ENCODE measurements at regions of chr2 and their contacts with region 1.

Region 1: DNA sequence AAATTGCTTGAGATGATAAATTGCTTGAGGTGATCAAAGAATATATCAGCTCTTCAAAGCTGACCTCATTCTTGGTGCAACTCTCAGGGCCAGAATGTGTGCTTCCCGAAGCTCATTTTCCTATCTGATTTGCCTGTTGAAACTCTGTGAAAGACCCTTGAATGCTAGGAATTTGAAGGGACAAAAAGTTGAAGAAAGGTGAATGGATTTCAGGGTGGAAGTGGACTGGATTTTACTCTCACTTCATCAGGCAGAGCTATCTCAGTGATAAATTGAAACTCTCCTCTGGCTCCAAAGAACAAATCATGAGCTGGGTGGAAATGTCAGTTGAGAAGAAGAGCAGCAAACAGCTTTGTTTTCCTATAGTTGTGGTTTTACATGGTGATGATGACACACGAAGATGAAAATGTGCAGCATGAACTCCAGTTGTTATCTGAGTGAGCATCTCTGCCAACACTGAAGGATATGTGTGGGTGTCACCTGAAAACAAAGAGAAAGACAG is 34.4 kb downstream of the CD28 start:
- DNase-seq: peak in 7 of 9 donors; percentile 68 to 94 (median 88)
- ATAC-seq: peak; percentile 93
- H3K4me3 ChIP-seq: no peak overlapping the region
- H3K4me3 Mint-ChIP-seq: peak overlapping the region; percentile 60 to 87 (median 70)
- H3K27ac ChIP-seq: peak overlapping the region; percentile 80
- H3K27ac Mint-ChIP-seq: peak overlapping the region; percentile 79 to 98 (median 96)
- H3K4me1 ChIP-seq: peaks cover 55 to 86% of the 10 kb centered on the region in 2 donors
- H3K4me1 Mint-ChIP-seq: peaks cover 57 to 93% (median 84%) of the 10 kb centered on the region in 7 donors
- H3K27me3 ChIP-seq: no peaks in the 10 kb centered on the region
- H3K27me3 Mint-ChIP-seq: no peaks in the 10 kb centered on the region

Region 2: GRCh38 chr2:202564226-202564625 is 1176.6 kb before region 1 on chr2:
- CTCF ChIA-PET with region 1: no interaction called
- POLR2A ChIA-PET with region 1: no interaction called
- intact Hi-C with region 1: no loop called
- DNase-seq: no peak
- ATAC-seq: no peak
- H3K4me3 ChIP-seq: no peak overlapping the region
- H3K4me3 Mint-ChIP-seq: no peak overlapping the region
- H3K27ac ChIP-seq: no peak overlapping the region
- H3K27ac Mint-ChIP-seq: no peak overlapping the region
- H3K4me1 ChIP-seq: no peaks in the 10 kb centered on the region
- H3K4me1 Mint-ChIP-seq: no peaks in the 10 kb centered on the region
- H3K27me3 ChIP-seq: no peaks in the 10 kb centered on the region
- H3K27me3 Mint-ChIP-seq: no peaks in the 10 kb centered on the region

Region 3: GRCh38 chr2:203718087-203718486 is 22.7 kb before region 1 on chr2:
- CTCF ChIA-PET with region 1: interaction called, 31 read pairs
- POLR2A ChIA-PET with region 1: interaction called, 343 read pairs
- intact Hi-C with region 1: loop called (anchors 1 kb)
- DNase-seq: peak in 8 of 9 donors; percentile 45 to 62 (median 60)
- ATAC-seq: peak; percentile 49
- H3K4me3 ChIP-seq: peak overlapping the region; percentile 29
- H3K4me3 Mint-ChIP-seq: peak overlapping the region; percentile 23 to 91 (median 80)
- H3K27ac ChIP-seq: peak overlapping the region; percentile 71
- H3K27ac Mint-ChIP-seq: peak overlapping the region; percentile 90 to 99 (median 97)
- H3K4me1 ChIP-seq: peaks cover 89 to 95% of the 10 kb centered on the region in 2 donors
- H3K4me1 Mint-ChIP-seq: peaks cover 77 to 100% (median 95%) of the 10 kb centered on the region in 7 donors
- H3K27me3 ChIP-seq: no peaks in the 10 kb centered on the region
- H3K27me3 Mint-ChIP-seq: no peaks in the 10 kb centered on the region

Region 4: DNA sequence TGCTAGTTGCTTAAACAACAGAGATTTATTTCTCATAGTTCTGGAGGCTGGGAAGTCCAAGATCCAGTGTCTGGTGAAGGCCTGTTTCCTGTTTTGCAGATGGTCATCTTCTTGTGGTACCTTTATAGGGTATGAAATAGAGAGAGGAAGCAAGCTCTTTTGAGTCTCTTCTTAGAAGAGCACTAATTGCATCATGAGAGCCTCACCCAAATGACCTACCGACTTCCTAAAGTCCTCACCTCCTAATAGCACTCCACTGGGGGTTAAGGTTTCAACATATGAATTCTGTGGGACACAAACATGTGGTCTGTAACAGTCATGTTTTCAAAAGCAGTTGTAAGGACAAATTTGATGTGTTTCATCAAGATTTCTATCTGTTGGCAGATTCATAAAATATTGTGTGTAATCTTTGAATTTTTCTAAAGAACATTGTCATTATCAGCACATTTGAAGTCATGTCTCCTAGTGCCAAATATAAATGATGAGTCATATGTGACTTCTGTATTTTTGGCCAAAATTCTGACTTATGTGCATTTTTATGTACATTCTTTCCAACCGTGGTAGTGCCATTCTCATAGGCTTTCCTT is 10.9 kb after region 1 on chr2:
- CTCF ChIA-PET with region 1: interaction called, 4 read pairs
- POLR2A ChIA-PET with region 1: interaction called, 31 read pairs
- intact Hi-C with region 1: loop called (anchors 1 kb)
- DNase-seq: no peak
- ATAC-seq: no peak
- H3K4me3 ChIP-seq: no peak overlapping the region
- H3K4me3 Mint-ChIP-seq: no peak overlapping the region
- H3K27ac ChIP-seq: no peak overlapping the region
- H3K27ac Mint-ChIP-seq: peak overlapping the region in 7 of 9 donors; percentile 4 to 56 (median 38)
- H3K4me1 ChIP-seq: peaks cover 12 to 22% of the 10 kb centered on the region in 2 donors
- H3K4me1 Mint-ChIP-seq: peaks cover 22 to 68% (median 57%) of the 10 kb centered on the region in 7 donors
- H3K27me3 ChIP-seq: no peaks in the 10 kb centered on the region
- H3K27me3 Mint-ChIP-seq: no peaks in the 10 kb centered on the region

Region 5: GRCh38 chr2:203804070-203804469 is 63.2 kb after region 1 on chr2:
- CTCF ChIA-PET with region 1: interaction called, 3 read pairs
- POLR2A ChIA-PET with region 1: interaction called, 12 read pairs
- intact Hi-C with region 1: loop called (anchors 2 kb)
- DNase-seq: peak in 8 of 9 donors; percentile 27 to 57 (median 42)
- ATAC-seq: peak; percentile 75
- H3K4me3 ChIP-seq: peak overlapping the region; percentile 12
- H3K4me3 Mint-ChIP-seq: peak overlapping the region; percentile 23 to 80 (median 63)
- H3K27ac ChIP-seq: peak overlapping the region; percentile 47
- H3K27ac Mint-ChIP-seq: peak overlapping the region; percentile 1 to 83 (median 76)
- H3K4me1 ChIP-seq: peaks cover 28 to 34% of the 10 kb centered on the region in 2 donors
- H3K4me1 Mint-ChIP-seq: peaks cover 27 to 83% (median 72%) of the 10 kb centered on the region in 7 donors
- H3K27me3 ChIP-seq: no peaks in the 10 kb centered on the region
- H3K27me3 Mint-ChIP-seq: peaks cover 0 to 3% (median 0%) of the 10 kb centered on the region in 5 donors

Region 6: DNA sequence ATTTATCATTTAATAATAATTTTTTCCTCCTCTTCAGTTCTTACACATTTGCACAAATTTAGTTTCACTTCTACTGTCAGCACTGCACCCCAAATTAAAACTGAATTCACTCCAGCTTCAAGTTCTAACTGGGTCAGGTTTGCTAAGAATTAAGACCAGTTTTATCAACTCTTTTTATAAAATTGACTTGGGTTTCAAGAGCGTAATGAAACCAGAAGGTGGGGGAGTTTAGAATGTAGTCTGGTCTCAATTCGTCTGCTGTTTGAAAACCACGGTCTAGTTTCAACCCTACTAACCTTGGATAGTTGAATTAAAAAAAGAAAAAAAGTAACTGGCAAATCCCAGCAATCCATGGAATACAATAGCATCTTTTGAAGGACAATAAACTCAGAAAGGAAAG is 112.4 kb after region 1 on chr2:
- CTCF ChIA-PET with region 1: no interaction called
- POLR2A ChIA-PET with region 1: no interaction called
- intact Hi-C with region 1: no loop called
- DNase-seq: no peak
- ATAC-seq: no peak
- H3K4me3 ChIP-seq: peak overlapping the region; percentile 20
- H3K4me3 Mint-ChIP-seq: peak overlapping the region in 9 of 10 donors; percentile 58 to 81 (median 67)
- H3K27ac ChIP-seq: peak overlapping the region; percentile 56
- H3K27ac Mint-ChIP-seq: peak overlapping the region in 8 of 9 donors; percentile 50 to 88 (median 67)
- H3K4me1 ChIP-seq: peaks cover 0 to 2% of the 10 kb centered on the region in 2 donors
- H3K4me1 Mint-ChIP-seq: peaks cover 13 to 48% (median 28%) of the 10 kb centered on the region in 7 donors
- H3K27me3 ChIP-seq: no peaks in the 10 kb centered on the region
- H3K27me3 Mint-ChIP-seq: no peaks in the 10 kb centered on the region

Region 7: DNA sequence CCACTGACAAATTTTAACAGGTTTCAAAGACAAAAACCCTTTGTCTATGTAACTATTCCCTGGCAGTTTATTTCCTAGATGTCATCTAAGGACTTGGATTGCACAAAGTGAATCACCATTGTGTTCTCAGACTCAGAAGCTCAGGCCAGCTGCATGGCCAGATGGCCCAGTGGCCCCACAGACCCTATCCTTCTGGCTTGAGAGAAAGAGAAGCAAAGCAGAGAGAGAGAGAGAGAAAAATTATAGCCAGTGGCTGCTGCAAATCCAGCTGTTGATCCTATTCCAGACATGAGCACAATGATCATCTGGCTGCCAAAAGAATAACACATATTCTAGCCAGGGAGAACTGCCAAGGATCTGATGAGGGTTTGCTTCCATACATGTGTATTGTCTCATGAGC is 152.6 kb after region 1 on chr2:
- CTCF ChIA-PET with region 1: no interaction called
- POLR2A ChIA-PET with region 1: no interaction called
- intact Hi-C with region 1: loop called in 1 of 2 experiments (anchors 5 kb)
- DNase-seq: no peak
- ATAC-seq: no peak
- H3K4me3 ChIP-seq: no peak overlapping the region
- H3K4me3 Mint-ChIP-seq: no peak overlapping the region
- H3K27ac ChIP-seq: no peak overlapping the region
- H3K27ac Mint-ChIP-seq: peak overlapping the region in 1 of 9 donors; percentile 77
- H3K4me1 ChIP-seq: no peaks in the 10 kb centered on the region
- H3K4me1 Mint-ChIP-seq: peaks cover 0 to 66% (median 7%) of the 10 kb centered on the region in 7 donors
- H3K27me3 ChIP-seq: no peaks in the 10 kb centered on the region
- H3K27me3 Mint-ChIP-seq: peaks cover 0 to 6% (median 0%) of the 10 kb centered on the region in 5 donors

Measured in naive thymus-derived CD4-positive, alpha-beta T cell (primary cell).